ENCODE measurements at regions of chr14 and their contacts with region 1.

Region 1: DNA sequence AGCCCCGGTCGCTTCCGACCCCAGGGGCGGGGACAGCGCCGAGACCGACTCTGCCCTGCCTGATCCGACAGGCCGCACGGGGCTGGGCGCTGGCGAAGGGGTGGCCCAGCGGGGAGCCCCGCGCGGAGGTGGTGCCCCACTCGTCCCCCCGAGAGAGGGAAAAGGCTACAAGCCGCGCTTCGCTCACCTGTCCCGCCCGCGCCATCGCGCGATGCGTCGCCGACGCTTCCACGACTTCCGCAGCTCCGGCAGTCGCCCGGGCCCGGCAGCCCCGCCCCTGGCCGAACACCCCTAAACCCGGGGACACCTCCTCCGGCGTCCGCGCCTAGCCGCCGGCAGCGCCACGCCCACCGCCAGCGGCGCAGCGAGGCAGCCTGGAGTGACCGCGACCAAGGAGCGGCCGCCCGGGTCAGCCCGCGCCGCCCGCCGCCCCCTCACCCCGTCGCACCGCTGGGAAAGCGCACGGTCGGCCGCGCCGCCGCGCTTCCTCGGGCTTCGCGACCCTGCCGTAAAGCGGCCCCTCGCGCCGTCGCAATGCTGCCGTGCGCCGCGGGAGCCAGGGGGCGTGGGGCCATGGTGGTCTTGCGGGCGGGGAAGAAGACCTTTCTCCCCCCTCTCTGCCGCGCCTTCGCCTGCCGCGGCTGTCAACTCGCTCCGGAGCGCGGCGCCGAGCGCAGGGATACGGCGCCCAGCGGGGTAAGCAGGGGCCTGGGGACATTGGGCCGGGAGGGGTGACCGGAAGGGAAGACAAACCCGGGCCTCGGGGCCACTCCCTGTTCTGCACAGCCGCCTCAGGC is at the starts of genes BAG5 and COA8:
- DNase-seq: peak; percentile 90
- H3K4me3 ChIP-seq: peak within 1 kb of the TSS; percentile 86
- H3K27ac ChIP-seq: peak within 1 kb of the TSS; percentile 71
- H3K4me1 ChIP-seq: peaks cover 44% of the 10 kb centered on the region
- CTCF ChIP-seq: no peak
- total RNA-seq, gene BAG5: 26.1 and 29.2 TPM in 2 replicates
- total RNA-seq, gene COA8: 18.2 and 18.7 TPM in 2 replicates

Region 2: DNA sequence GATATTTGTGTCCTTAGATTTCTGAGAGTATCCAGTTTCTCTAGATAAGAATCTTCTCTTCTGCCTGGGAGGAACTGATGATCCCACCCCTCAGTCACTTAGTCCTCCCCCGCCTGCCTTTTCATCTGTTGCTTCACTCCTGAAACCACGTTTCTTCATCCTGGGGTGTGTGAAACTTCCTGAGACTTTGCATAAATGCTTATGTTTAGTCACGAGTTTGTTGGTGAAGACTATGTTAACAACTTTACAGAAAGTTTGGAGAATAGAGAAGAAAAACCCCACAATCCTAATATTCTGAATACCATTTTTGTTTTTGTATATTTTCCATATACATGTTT is 144.2 kb before region 1 on chr14:
- CTCF ChIA-PET with region 1: no interaction called
- POLR2A ChIA-PET with region 1: interaction called, 16 read pairs
- intact Hi-C with region 1: no loop called
- DNase-seq: no peak
- H3K4me3 ChIP-seq: no peak overlapping the region
- H3K27ac ChIP-seq: no peak overlapping the region
- H3K4me1 ChIP-seq: peaks cover 9% of the 10 kb centered on the region
- CTCF ChIP-seq: no peak

Region 3: GRCh38 chr14:103518422-103519042 is 44.1 kb before region 1 on chr14:
- CTCF ChIA-PET with region 1: no interaction called
- POLR2A ChIA-PET with region 1: no interaction called
- intact Hi-C with region 1: loop called (anchors 5 kb)
- DNase-seq: peak; percentile 66
- H3K4me3 ChIP-seq: no peak overlapping the region
- H3K27ac ChIP-seq: no peak overlapping the region
- H3K4me1 ChIP-seq: peaks cover 17% of the 10 kb centered on the region
- CTCF ChIP-seq: peak; percentile 90

Region 4: GRCh38 chr14:103628684-103629502 is 66.3 kb after region 1 on chr14 and contains the start of gene KLC1:
- CTCF ChIA-PET with region 1: no interaction called
- POLR2A ChIA-PET with region 1: no interaction called
- intact Hi-C with region 1: loop called (anchors 5 kb)
- DNase-seq: peak; percentile 79
- H3K4me3 ChIP-seq: peak within 1 kb of the TSS; percentile 90
- H3K27ac ChIP-seq: peak within 1 kb of the TSS; percentile 57
- H3K4me1 ChIP-seq: peaks cover 53% of the 10 kb centered on the region
- CTCF ChIP-seq: no peak
- total RNA-seq, gene KLC1: 157 and 204 TPM in 2 replicates

Region 5: DNA sequence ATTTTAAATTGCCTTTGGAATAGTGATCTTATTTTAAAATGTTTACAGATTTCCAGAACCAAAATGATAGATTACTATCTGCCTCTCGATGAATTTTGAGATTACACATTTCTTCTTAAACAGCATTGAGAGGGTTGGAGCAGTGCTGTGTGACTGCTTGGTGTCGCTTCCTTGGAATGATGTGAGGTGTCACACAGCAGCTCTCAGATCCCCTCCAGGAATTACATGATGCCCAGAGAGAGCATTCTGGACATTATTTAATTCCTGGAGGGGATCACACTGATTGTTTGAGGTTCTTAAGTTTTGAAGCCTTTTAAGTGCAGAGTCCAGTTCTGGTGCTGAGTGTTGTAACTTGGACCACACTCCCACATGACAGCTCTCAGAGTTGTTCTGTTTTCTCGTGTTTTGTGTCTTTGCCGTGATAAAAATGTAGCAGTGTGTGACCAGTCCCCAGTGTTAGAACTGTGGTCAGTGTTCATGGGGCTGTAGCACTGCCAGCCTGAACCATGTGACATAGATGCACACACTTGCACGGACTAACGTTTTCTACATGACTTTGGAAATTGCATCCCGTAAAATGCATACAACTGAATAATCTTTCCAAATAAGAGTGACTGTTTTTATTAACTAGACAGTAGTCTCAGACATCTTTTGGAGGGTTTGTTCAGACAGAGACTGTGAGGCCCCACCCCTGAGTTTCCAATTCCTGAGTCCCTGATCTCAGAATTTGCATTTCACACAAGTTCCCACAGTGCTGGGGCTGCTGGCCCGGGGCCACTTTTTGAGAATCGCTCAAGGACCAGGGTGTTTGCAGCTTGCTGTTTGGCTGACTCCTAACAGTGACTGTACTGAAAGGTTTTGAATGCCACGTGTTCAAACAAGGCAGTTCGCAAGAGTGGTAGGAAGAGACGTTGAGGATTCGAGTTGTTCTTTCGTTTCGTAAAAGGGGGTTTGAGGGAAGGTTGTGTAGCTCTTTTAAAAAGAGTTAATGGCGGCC is 126.6 kb after region 1 on chr14:
- CTCF ChIA-PET with region 1: interaction called, 4 read pairs
- POLR2A ChIA-PET with region 1: interaction called, 4 read pairs
- intact Hi-C with region 1: loop called (anchors 5 kb)
- DNase-seq: peak; percentile 75
- H3K4me3 ChIP-seq: peak overlapping the region; percentile 60
- H3K27ac ChIP-seq: peak overlapping the region; percentile 91
- H3K4me1 ChIP-seq: peaks cover 57% of the 10 kb centered on the region
- CTCF ChIP-seq: no peak

Region 6: GRCh38 chr14:103847451-103848188 is 285.0 kb after region 1 on chr14 and contains the start of gene PPP1R13B:
- CTCF ChIA-PET with region 1: no interaction called
- POLR2A ChIA-PET with region 1: no interaction called
- intact Hi-C with region 1: loop called (anchors 5 kb)
- DNase-seq: peak; percentile 93
- H3K4me3 ChIP-seq: peak within 1 kb of the TSS; percentile 80
- H3K27ac ChIP-seq: no peak within 1 kb of the TSS
- H3K4me1 ChIP-seq: peaks cover 11% of the 10 kb centered on the region
- CTCF ChIP-seq: no peak
- total RNA-seq, gene PPP1R13B: 8.2 and 9.7 TPM in 2 replicates

Region 7: GRCh38 chr14:103910262-103910935 is 347.8 kb after region 1 on chr14:
- CTCF ChIA-PET with region 1: no interaction called
- POLR2A ChIA-PET with region 1: no interaction called
- intact Hi-C with region 1: loop called (anchors 10 kb)
- DNase-seq: peak; percentile 68
- H3K4me3 ChIP-seq: no peak overlapping the region
- H3K27ac ChIP-seq: no peak overlapping the region
- H3K4me1 ChIP-seq: peaks cover 8% of the 10 kb centered on the region
- CTCF ChIP-seq: peak; percentile 92

Measured in OCI-LY7 (cell line).